Right ventricle myocardium inferior (tissue), 1 donor: ENCODE measurements at regions of chrX and their contacts with region 1.

Region 1: DNA sequence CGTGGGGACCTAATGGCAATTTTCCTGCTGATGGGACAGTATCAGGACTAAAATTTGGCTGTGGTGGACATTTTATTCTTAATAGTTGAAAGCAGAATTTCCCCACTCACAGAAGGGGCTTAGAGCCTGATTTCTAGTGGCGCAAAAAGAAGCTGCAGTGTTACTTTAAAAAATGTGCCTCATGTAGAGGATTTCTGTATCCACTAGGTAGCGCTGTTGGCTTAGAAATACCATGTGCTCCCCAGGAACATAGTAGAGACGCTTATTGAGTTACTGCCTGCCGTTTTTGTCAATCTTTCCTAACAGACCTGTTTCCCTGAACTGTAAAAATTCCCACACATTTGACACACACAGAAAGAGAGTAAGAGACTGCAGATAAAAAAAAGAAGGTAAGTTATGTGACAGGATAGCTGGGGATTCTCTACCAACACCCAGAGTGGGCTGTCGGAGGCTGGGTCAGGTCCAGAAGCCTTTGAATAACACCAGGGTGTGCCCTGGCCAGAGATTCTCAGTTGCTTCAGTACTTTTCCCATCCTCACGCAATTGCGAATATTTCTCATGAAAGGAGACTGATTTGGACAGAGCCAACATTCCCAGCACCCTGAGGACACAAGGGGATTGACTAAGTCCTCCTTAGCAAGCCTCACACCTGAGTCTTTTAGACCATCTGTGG is 88.4 kb downstream of the ZXDA start:
- DNase-seq: no peak
- ATAC-seq: peak; percentile 48

Region 2: GRCh38 chrX:57918750-57919436 is 97.1 kb after region 1 on chrX:
- intact Hi-C with region 1: loop called (anchors 1 kb)
- DNase-seq: no peak
- ATAC-seq: peak; percentile 20

Region 3: DNA sequence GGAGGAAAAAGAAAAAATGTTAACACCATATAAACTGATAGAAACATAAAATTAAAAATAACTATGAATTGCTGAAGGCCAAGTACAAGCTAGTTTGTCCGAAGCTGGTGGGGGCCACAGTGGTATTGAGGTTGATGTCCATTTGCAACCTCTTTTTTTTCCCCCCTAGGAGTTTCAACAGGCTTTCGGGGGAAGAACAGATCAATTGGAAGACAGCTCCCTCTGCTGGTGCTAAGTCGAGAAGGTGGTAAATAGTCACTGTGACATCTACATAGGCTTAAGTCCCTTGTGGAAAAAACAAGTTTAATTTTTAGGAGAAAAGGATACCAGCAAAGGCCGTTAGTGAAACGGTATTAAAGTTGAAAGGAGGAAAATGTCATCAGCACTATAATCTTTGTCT is 204.1 kb after region 1 on chrX:
- intact Hi-C with region 1: loop called (anchors 5 kb)
- DNase-seq: no peak
- ATAC-seq: no peak